AG04450 (cell line): ENCODE measurements at regions of chr11 and their contacts with region 1.

Region 1: DNA sequence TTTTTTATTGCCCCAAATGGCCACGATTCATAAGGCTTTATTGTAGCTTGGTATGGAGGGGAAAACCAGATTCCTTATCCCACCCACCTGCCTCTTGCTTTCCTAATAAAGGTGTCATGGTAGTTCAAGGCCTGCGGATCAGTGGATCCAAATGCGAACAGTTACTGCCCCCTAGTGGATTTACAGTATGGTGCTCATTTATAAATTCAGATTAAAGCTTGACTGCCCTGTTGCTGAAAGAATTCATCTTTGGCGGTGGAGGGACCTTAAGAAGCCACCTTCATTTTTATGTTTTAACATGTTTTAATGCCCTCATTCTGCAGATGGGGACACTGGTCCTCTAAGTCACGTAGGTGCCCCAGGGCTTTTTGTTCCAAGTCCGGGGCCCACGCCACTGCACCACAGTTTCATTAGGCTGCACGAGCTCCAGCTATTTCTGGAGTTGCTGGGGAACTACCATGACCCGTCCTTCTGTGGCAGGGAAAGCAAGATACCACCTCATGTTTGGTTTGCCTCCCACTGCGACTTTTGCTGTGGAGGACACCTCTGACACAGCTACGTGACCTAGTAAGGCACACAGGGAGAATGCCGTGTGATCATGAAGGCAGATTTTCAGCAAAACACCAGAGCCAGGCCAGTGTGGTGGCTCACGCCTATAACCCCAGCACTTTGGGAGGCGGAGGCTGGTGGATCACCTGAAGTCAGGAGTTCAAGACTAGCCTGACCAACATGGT is 15.6 kb upstream of the INCENP start:
- DNase-seq: no peak
- H3K4me3 ChIP-seq: no peak overlapping the region
- H3K27ac ChIP-seq: no peak overlapping the region
- H3K27me3 ChIP-seq: no peaks in the 10 kb centered on the region
- CTCF ChIP-seq: peak; percentile 79

Region 2: DNA sequence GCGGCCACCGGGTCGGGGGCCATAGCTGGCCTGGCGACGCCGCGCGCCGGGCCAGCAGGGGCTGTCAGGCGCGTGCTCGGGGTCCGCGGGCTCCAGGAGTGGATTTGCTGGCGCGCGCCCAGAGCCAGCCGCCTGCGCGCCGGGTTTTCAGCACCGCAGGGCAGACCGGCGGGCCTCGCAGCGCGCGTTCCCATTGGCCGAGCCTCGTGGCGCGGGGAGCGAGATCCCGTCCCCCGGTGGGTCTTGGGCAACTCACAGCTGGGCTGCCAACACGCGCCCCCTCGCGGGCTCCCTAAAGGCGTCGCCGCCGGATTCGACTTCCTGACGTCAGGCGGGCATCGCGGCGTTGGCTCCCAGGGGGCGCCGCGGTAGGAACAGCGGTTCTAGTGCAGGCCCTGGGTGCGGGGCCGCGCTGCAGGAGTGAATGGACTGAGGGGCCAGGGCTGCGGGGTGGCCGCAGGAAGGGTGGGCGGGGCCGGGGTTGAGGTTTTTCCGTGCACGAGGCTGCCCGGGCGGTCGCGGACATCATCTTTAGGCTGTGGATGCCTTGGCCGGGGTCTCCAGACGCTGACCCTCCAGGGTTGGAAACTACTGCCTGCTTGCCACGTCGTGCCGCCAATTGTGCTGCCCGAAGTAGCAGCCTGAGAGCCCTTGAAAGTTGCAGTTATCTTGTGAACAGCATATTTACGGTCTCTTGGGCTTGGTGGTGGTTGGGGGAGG is 291.3 kb before region 1 on chr11 and contains the start of gene FADS1:
- CTCF ChIA-PET with region 1: interaction called, 11 read pairs
- POLR2A ChIA-PET with region 1: interaction called, 3 read pairs
- DNase-seq: peak; percentile 89
- H3K4me3 ChIP-seq: peak within 1 kb of the TSS; percentile 89
- H3K27ac ChIP-seq: peak within 1 kb of the TSS; percentile 86
- H3K27me3 ChIP-seq: no peaks in the 10 kb centered on the region
- CTCF ChIP-seq: peak; percentile 57
- polyA plus RNA-seq, gene FADS1: 50.4 and 52.4 TPM in 2 replicates

Region 3: GRCh38 chr11:61885166-61885778 is 222.9 kb before region 1 on chr11:
- CTCF ChIA-PET with region 1: interaction called, 11 read pairs
- POLR2A ChIA-PET with region 1: no interaction called
- DNase-seq: no peak
- H3K4me3 ChIP-seq: no peak overlapping the region
- H3K27ac ChIP-seq: no peak overlapping the region
- H3K27me3 ChIP-seq: no peaks in the 10 kb centered on the region
- CTCF ChIP-seq: no peak

Region 4: GRCh38 chr11:61947486-61948210 is 160.5 kb before region 1 on chr11:
- CTCF ChIA-PET with region 1: interaction called, 104 read pairs
- POLR2A ChIA-PET with region 1: no interaction called
- DNase-seq: no peak
- H3K4me3 ChIP-seq: no peak overlapping the region
- H3K27ac ChIP-seq: no peak overlapping the region
- H3K27me3 ChIP-seq: peaks cover 13% of the 10 kb centered on the region
- CTCF ChIP-seq: peak; percentile 99

Region 5: GRCh38 chr11:62088331-62088933 is 19.8 kb before region 1 on chr11:
- CTCF ChIA-PET with region 1: interaction called, 14 read pairs
- POLR2A ChIA-PET with region 1: no interaction called
- DNase-seq: no peak
- H3K4me3 ChIP-seq: no peak overlapping the region
- H3K27ac ChIP-seq: no peak overlapping the region
- H3K27me3 ChIP-seq: no peaks in the 10 kb centered on the region
- CTCF ChIP-seq: no peak